Endothelial cell of umbilical vein (primary cell): ENCODE measurements at regions of chr7 and their contacts with region 1.

Region 1: GRCh38 chr7:52925332-52925731 is 110.1 kb upstream of the POM121L12 start:
- DNase-seq: no peak
- H3K4me3 ChIP-seq: no peak overlapping the region
- H3K27ac ChIP-seq: no peak overlapping the region
- H3K4me1 ChIP-seq: peaks cover 26% of the 10 kb centered on the region
- H3K27me3 ChIP-seq: no peaks in the 10 kb centered on the region
- CTCF ChIP-seq: no peak
- POLR2A ChIP-seq: no peak

Region 2: GRCh38 chr7:51444936-51445335 is 1480.4 kb before region 1 on chr7:
- CTCF ChIA-PET with region 1: no interaction called
- POLR2A ChIA-PET with region 1: no interaction called
- dilution Hi-C with region 1: no loop called
- intact Hi-C with region 1: no loop called
- DNase-seq: no peak
- H3K4me3 ChIP-seq: no peak overlapping the region
- H3K27ac ChIP-seq: no peak overlapping the region
- H3K4me1 ChIP-seq: no peaks in the 10 kb centered on the region
- H3K27me3 ChIP-seq: no peaks in the 10 kb centered on the region
- CTCF ChIP-seq: no peak
- POLR2A ChIP-seq: no peak

Region 3: GRCh38 chr7:52271703-52272102 is 653.6 kb before region 1 on chr7:
- CTCF ChIA-PET with region 1: no interaction called
- POLR2A ChIA-PET with region 1: no interaction called
- dilution Hi-C with region 1: no loop called
- intact Hi-C with region 1: loop called (anchors 1 kb)
- DNase-seq: no peak
- H3K4me3 ChIP-seq: no peak overlapping the region
- H3K27ac ChIP-seq: peak overlapping the region; percentile 5
- H3K4me1 ChIP-seq: peaks cover 30% of the 10 kb centered on the region
- H3K27me3 ChIP-seq: no peaks in the 10 kb centered on the region
- CTCF ChIP-seq: no peak
- POLR2A ChIP-seq: no peak

Region 4: GRCh38 chr7:52669027-52669426 is 256.3 kb before region 1 on chr7:
- CTCF ChIA-PET with region 1: no interaction called
- POLR2A ChIA-PET with region 1: no interaction called
- dilution Hi-C with region 1: no loop called
- intact Hi-C with region 1: loop called (anchors 10 kb)
- DNase-seq: no peak
- H3K4me3 ChIP-seq: no peak overlapping the region
- H3K27ac ChIP-seq: no peak overlapping the region
- H3K4me1 ChIP-seq: peaks cover 2% of the 10 kb centered on the region
- H3K27me3 ChIP-seq: no peaks in the 10 kb centered on the region
- CTCF ChIP-seq: no peak
- POLR2A ChIP-seq: no peak

Region 5: DNA sequence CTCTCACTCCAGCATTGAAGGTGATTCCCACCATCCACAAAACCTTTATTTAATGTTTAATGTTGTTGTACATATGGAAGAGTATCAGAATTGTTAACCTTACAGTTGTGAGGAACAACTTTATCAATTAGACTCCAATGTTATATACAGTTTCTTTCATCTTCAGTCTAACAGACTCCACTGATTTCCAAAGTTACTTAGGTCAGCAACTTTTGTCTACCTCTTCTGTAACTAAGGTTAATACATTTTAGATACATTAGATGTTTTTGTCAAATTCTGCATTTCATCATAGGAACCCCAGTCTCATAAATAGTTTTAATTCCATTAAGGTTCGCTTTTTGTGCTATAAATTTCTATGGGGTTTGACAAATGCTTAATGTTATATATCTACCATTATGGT is 113.8 kb before region 1 on chr7:
- CTCF ChIA-PET with region 1: no interaction called
- POLR2A ChIA-PET with region 1: no interaction called
- dilution Hi-C with region 1: no loop called
- intact Hi-C with region 1: no loop called
- DNase-seq: no peak
- H3K4me3 ChIP-seq: no peak overlapping the region
- H3K27ac ChIP-seq: no peak overlapping the region
- H3K4me1 ChIP-seq: no peaks in the 10 kb centered on the region
- H3K27me3 ChIP-seq: no peaks in the 10 kb centered on the region
- CTCF ChIP-seq: no peak
- POLR2A ChIP-seq: no peak

Region 6: DNA sequence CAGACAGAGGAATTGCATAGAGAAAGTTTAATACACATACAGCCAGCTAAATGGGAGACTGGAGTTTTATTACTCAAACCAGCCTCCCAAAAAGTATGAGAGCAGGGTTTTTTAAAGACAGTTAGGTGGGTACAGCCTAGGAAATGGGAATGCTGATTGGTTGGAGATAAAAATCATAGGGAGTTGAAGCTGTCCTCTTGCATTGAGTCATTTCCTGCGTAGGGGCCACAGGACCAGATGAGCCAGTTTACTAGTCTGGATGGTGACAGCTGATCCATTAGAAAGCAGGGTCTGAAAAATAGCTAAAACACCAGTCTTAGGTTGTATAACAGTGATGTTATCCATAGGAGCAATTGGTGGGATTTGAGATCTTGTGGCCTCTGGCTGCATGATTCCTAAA is 34.0 kb after region 1 on chr7:
- CTCF ChIA-PET with region 1: interaction called, 8 read pairs
- POLR2A ChIA-PET with region 1: no interaction called
- dilution Hi-C with region 1: no loop called
- intact Hi-C with region 1: loop called (anchors 1 kb)
- DNase-seq: peak; percentile 25
- H3K4me3 ChIP-seq: no peak overlapping the region
- H3K27ac ChIP-seq: peak overlapping the region; percentile 32
- H3K4me1 ChIP-seq: peaks cover 39% of the 10 kb centered on the region
- H3K27me3 ChIP-seq: no peaks in the 10 kb centered on the region
- CTCF ChIP-seq: no peak
- POLR2A ChIP-seq: no peak

Region 7: GRCh38 chr7:53100091-53100490 is 174.8 kb after region 1 on chr7:
- CTCF ChIA-PET with region 1: no interaction called
- POLR2A ChIA-PET with region 1: no interaction called
- dilution Hi-C with region 1: no loop called
- intact Hi-C with region 1: loop called (anchors 1 kb)
- DNase-seq: peak; percentile 67
- H3K4me3 ChIP-seq: no peak overlapping the region
- H3K27ac ChIP-seq: peak overlapping the region; percentile 8
- H3K4me1 ChIP-seq: peaks cover 24% of the 10 kb centered on the region
- H3K27me3 ChIP-seq: no peaks in the 10 kb centered on the region
- CTCF ChIP-seq: no peak
- POLR2A ChIP-seq: no peak

Region 8: GRCh38 chr7:53246957-53247356 is 321.6 kb after region 1 on chr7:
- CTCF ChIA-PET with region 1: no interaction called
- POLR2A ChIA-PET with region 1: no interaction called
- dilution Hi-C with region 1: no loop called
- intact Hi-C with region 1: loop called (anchors 1 kb)
- DNase-seq: peak; percentile 63
- H3K4me3 ChIP-seq: no peak overlapping the region
- H3K27ac ChIP-seq: peak overlapping the region; percentile 19
- H3K4me1 ChIP-seq: peaks cover 8% of the 10 kb centered on the region
- H3K27me3 ChIP-seq: no peaks in the 10 kb centered on the region
- CTCF ChIP-seq: no peak
- POLR2A ChIP-seq: no peak

Region 9: GRCh38 chr7:53340220-53340619 is 414.9 kb after region 1 on chr7:
- CTCF ChIA-PET with region 1: no interaction called
- POLR2A ChIA-PET with region 1: no interaction called
- dilution Hi-C with region 1: no loop called
- intact Hi-C with region 1: no loop called
- DNase-seq: no peak
- H3K4me3 ChIP-seq: no peak overlapping the region
- H3K27ac ChIP-seq: no peak overlapping the region
- H3K4me1 ChIP-seq: no peaks in the 10 kb centered on the region
- H3K27me3 ChIP-seq: no peaks in the 10 kb centered on the region
- CTCF ChIP-seq: no peak
- POLR2A ChIP-seq: no peak